Activated CD4-positive, alpha-beta memory T cell treated with anti-CD3 and anti-CD28 coated beads for 36 hours (primary cell): ENCODE measurements at regions of chr16 and their contacts with region 1.

Region 1: GRCh38 chr16:50763211-50763610 is 21.3 kb downstream of the CYLD start:
- DNase-seq: no peak
- H3K4me3 Mint-ChIP-seq: no peak overlapping the region
- H3K27ac Mint-ChIP-seq: peak overlapping the region; percentile 43
- H3K4me1 Mint-ChIP-seq: peaks cover 89% of the 10 kb centered on the region
- H3K27me3 Mint-ChIP-seq: no peaks in the 10 kb centered on the region

Region 2: GRCh38 chr16:50690177-50690576 is 73.0 kb before region 1 on chr16:
- CTCF ChIA-PET with region 1: no interaction called
- POLR2A ChIA-PET with region 1: no interaction called
- intact Hi-C with region 1: no loop called
- DNase-seq: no peak
- H3K4me3 Mint-ChIP-seq: no peak overlapping the region
- H3K27ac Mint-ChIP-seq: no peak overlapping the region
- H3K4me1 Mint-ChIP-seq: peaks cover 52% of the 10 kb centered on the region
- H3K27me3 Mint-ChIP-seq: no peaks in the 10 kb centered on the region

Region 3: DNA sequence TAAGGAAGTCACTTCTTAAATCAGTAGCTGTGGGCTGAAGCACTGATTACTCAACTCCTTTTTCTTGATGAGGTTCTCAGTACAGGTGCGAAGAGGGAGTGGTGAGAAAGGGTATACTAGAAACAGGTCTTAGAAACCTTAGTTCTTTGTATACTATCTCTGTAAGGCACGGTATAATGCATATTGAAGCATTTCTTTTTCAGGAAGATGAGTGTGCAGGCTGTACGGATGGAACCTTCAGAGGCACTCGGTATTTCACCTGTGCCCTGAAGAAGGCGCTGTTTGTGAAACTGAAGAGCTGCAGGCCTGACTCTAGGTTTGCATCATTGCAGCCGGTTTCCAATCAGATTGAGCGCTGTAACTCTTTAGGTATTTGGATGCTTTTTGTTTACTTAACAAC is 17.8 kb after region 1 on chr16:
- CTCF ChIA-PET with region 1: interaction called, 13 read pairs
- POLR2A ChIA-PET with region 1: interaction called, 4 read pairs
- intact Hi-C with region 1: loop called (anchors 1 kb)
- DNase-seq: peak; percentile 50
- H3K4me3 Mint-ChIP-seq: peak overlapping the region; percentile 33
- H3K27ac Mint-ChIP-seq: peak overlapping the region; percentile 78
- H3K4me1 Mint-ChIP-seq: peaks cover 70% of the 10 kb centered on the region
- H3K27me3 Mint-ChIP-seq: no peaks in the 10 kb centered on the region

Region 4: GRCh38 chr16:51163894-51164566 is 400.8 kb after region 1 on chr16:
- CTCF ChIA-PET with region 1: no interaction called
- POLR2A ChIA-PET with region 1: no interaction called
- intact Hi-C with region 1: no loop called
- DNase-seq: no peak
- H3K4me3 Mint-ChIP-seq: no peak overlapping the region
- H3K27ac Mint-ChIP-seq: no peak overlapping the region
- H3K4me1 Mint-ChIP-seq: no peaks in the 10 kb centered on the region
- H3K27me3 Mint-ChIP-seq: peaks cover 5% of the 10 kb centered on the region